HCT116 (cell line): ENCODE measurements at regions of chr11 and their contacts with region 1.

Region 1: DNA sequence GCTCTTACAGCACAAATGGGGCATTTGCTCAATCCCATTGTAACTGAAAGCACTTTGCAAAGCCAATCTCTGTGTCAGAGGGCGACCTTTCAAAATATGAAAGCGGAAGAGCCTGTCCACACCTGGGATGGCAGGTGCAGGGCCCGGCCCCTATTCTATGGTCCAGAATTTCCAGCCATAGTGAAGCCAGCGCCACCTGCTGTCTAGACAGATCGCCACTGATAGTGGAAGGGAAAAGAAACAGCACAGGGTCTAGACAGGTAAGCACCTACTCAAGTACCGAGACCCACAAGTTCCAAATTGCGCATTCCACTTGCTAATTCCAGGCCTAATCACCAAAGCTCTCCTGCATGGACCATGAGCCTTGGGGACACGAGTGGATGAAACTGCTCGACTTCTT is 141.4 kb downstream of the NTM start:
- DNase-seq: no peak
- ATAC-seq: peak; percentile 55
- H3K4me3 ChIP-seq: no peak overlapping the region
- H3K27ac ChIP-seq: no peak overlapping the region
- H3K4me1 ChIP-seq: no peaks in the 10 kb centered on the region
- H3K27me3 ChIP-seq: no peaks in the 10 kb centered on the region
- CTCF ChIP-seq: peak in 2 of 3 experiments; percentile 32 to 41; a peak in 3 of 6 replicates
- POLR2A ChIP-seq: no peak
- RAD21 ChIP-seq: peak; percentile 16; the same call in 1 of the 2 replicates

Region 2: DNA sequence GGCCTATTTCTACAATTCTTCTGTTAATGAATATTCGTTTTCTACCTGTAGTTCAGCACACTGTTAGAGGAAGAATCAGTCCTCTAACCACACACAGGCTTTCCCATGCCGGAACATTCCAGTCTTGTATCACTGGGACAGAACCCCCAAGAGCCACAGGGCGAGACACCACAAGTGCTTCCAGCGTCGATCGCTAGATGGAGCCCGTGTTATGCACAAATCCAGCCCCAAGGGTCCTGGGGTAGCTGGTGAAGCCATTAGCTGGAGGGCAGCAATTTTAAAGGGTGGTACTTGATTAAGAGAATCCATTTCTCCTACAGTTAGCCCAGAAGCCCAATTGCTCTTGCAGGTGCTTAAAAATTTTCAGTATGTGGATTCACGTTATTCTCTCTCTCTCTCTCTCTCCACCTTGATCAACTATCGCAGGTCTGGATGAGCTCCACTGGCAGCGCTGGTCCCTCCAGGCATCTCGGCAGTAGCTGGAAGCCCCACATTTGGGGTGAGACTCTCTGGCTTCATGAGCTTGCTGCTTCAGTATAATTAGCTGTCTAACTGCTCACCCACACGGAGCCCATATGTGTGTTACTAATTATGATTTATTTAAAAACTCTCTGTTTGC is 447.3 kb before region 1 on chr11:
- CTCF ChIA-PET with region 1: no interaction called
- POLR2A ChIA-PET with region 1: no interaction called
- RAD21 ChIA-PET with region 1: no interaction called
- intact Hi-C with region 1: loop called (anchors 2 kb)
- DNase-seq: peak; percentile 13
- ATAC-seq: peak; percentile 91
- H3K4me3 ChIP-seq: no peak overlapping the region
- H3K27ac ChIP-seq: no peak overlapping the region
- H3K4me1 ChIP-seq: no peaks in the 10 kb centered on the region
- H3K27me3 ChIP-seq: no peaks in the 10 kb centered on the region
- CTCF ChIP-seq: peak; percentile 31 to 82 (median 72); a peak in 5 of 6 replicates
- POLR2A ChIP-seq: no peak
- RAD21 ChIP-seq: peak; percentile 68

Region 3: GRCh38 chr11:131378931-131379330 is 132.9 kb before region 1 on chr11:
- CTCF ChIA-PET with region 1: no interaction called
- POLR2A ChIA-PET with region 1: no interaction called
- RAD21 ChIA-PET with region 1: no interaction called
- intact Hi-C with region 1: no loop called
- DNase-seq: no peak
- ATAC-seq: no peak
- H3K4me3 ChIP-seq: no peak overlapping the region
- H3K27ac ChIP-seq: no peak overlapping the region
- H3K4me1 ChIP-seq: no peaks in the 10 kb centered on the region
- H3K27me3 ChIP-seq: no peaks in the 10 kb centered on the region
- CTCF ChIP-seq: no peak
- POLR2A ChIP-seq: no peak
- RAD21 ChIP-seq: no peak

Region 4: DNA sequence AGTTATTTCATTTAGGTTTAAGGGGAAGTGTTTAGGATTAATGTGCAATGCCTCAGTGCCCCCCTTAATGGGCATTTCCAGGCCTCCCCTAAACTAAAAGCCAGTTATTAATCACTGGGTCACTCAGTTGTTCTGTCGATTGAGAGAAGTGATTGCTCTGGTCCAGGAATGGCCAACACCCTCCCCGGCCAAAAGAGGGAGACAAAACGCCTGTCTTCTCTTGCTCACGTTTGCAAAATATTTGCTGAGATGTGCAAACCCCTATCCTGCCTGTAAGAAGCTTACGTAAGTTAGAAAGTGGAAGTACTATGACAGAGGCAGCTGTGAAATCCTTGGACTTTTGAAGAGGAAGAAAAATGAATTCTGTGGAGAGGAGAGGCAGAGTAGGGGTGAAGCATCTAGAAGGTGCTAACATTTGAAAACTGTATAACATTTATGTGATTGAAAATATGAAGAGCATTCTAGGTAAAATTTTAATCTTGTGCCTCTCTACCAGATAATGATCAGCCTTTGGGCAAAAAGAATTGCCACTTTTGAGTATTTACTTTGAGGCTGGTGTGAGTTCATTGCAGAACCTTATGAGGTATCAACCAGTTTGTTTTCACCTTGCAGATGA is 103.7 kb before region 1 on chr11:
- CTCF ChIA-PET with region 1: no interaction called
- POLR2A ChIA-PET with region 1: no interaction called
- RAD21 ChIA-PET with region 1: no interaction called
- intact Hi-C with region 1: loop called (anchors 5 kb)
- DNase-seq: no peak
- ATAC-seq: no peak
- H3K4me3 ChIP-seq: no peak overlapping the region
- H3K27ac ChIP-seq: no peak overlapping the region
- H3K4me1 ChIP-seq: no peaks in the 10 kb centered on the region
- H3K27me3 ChIP-seq: no peaks in the 10 kb centered on the region
- CTCF ChIP-seq: peak in 2 of 3 experiments; percentile 32 to 38; a peak in 4 of 6 replicates
- POLR2A ChIP-seq: no peak
- RAD21 ChIP-seq: peak; percentile 14; the same call in 1 of the 2 replicates

Region 5: GRCh38 chr11:131875611-131876010 is 363.8 kb after region 1 on chr11:
- CTCF ChIA-PET with region 1: no interaction called
- POLR2A ChIA-PET with region 1: no interaction called
- RAD21 ChIA-PET with region 1: no interaction called
- intact Hi-C with region 1: no loop called
- DNase-seq: no peak
- ATAC-seq: no peak
- H3K4me3 ChIP-seq: no peak overlapping the region
- H3K27ac ChIP-seq: no peak overlapping the region
- H3K4me1 ChIP-seq: no peaks in the 10 kb centered on the region
- H3K27me3 ChIP-seq: no peaks in the 10 kb centered on the region
- CTCF ChIP-seq: no peak
- POLR2A ChIP-seq: no peak
- RAD21 ChIP-seq: no peak